Activated CD4-positive, alpha-beta T cell treated with anti-CD3 and anti-CD28 coated beads for 36 hours (primary cell): ENCODE measurements at regions of chr1 and their contacts with region 1.

Region 1: GRCh38 chr1:55204997-55205396 is 10.2 kb downstream of the USP24 start:
- DNase-seq: peak; percentile 30
- ATAC-seq: peak; percentile 70
- H3K4me3 Mint-ChIP-seq: no peak overlapping the region
- H3K27ac Mint-ChIP-seq: peak overlapping the region; percentile 37
- H3K4me1 Mint-ChIP-seq: peaks cover 81% of the 10 kb centered on the region
- H3K27me3 Mint-ChIP-seq: no peaks in the 10 kb centered on the region

Region 2: GRCh38 chr1:55164906-55165305 is 40.1 kb before region 1 on chr1:
- CTCF ChIA-PET with region 1: no interaction called
- POLR2A ChIA-PET with region 1: no interaction called
- intact Hi-C with region 1: loop called (anchors 5 kb)
- DNase-seq: no peak
- ATAC-seq: peak; percentile 87
- H3K4me3 Mint-ChIP-seq: no peak overlapping the region
- H3K27ac Mint-ChIP-seq: peak overlapping the region; percentile 70
- H3K4me1 Mint-ChIP-seq: peaks cover 41% of the 10 kb centered on the region
- H3K27me3 Mint-ChIP-seq: no peaks in the 10 kb centered on the region

Region 3: GRCh38 chr1:55531644-55532043 is 326.6 kb after region 1 on chr1:
- CTCF ChIA-PET with region 1: no interaction called
- POLR2A ChIA-PET with region 1: no interaction called
- intact Hi-C with region 1: no loop called
- DNase-seq: no peak
- ATAC-seq: no peak
- H3K4me3 Mint-ChIP-seq: no peak overlapping the region
- H3K27ac Mint-ChIP-seq: no peak overlapping the region
- H3K4me1 Mint-ChIP-seq: no peaks in the 10 kb centered on the region
- H3K27me3 Mint-ChIP-seq: peaks cover 11% of the 10 kb centered on the region